ENCODE measurements at regions of chr11 and their contacts with region 1.

Region 1: DNA sequence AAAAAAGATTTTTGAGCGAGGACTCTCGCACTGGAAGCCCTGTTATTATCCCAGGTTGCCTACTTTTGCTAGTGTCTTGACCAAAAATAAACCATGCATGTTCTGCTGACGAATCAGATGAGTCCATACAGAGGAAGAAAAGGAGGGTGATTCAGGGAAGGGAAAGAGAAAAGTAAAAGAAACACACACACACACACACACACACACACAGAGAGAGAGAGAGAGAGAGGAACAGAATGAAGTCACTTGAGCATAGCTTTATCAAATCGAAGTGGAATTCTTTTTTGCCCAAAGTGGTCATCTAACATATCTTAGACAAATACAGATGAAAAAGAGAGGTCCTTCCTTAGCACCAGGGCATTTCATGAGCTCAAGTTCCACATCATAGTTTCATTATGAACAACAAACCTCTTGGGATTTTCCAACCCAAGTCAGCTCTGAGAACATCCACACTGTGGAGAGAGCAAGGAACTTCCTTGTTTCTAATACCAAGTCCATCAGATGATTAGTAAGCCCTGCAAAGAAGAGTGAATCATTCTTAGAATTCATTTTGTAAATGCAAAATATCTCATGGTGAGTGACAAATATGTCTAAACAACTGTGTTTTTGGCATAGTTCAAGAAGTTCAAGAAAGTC is 7.7 kb upstream of the MMP12 start:
- H3K4me3 Mint-ChIP-seq: peak overlapping the region; percentile 2
- H3K27ac Mint-ChIP-seq: peak overlapping the region; percentile 95
- H3K4me1 Mint-ChIP-seq: peaks cover 53% of the 10 kb centered on the region
- H3K27me3 Mint-ChIP-seq: peaks cover 5% of the 10 kb centered on the region

Region 2: GRCh38 chr11:102920118-102920684 is 37.7 kb after region 1 on chr11:
- intact Hi-C with region 1: loop called (anchors 5 kb)
- H3K4me3 Mint-ChIP-seq: peak overlapping the region; percentile 1
- H3K27ac Mint-ChIP-seq: no peak overlapping the region
- H3K4me1 Mint-ChIP-seq: peaks cover 57% of the 10 kb centered on the region
- H3K27me3 Mint-ChIP-seq: peaks cover 42% of the 10 kb centered on the region